Naive thymus-derived CD4-positive, alpha-beta T cell (primary cell): ENCODE measurements at regions of chr1 and their contacts with region 1.

Region 1: DNA sequence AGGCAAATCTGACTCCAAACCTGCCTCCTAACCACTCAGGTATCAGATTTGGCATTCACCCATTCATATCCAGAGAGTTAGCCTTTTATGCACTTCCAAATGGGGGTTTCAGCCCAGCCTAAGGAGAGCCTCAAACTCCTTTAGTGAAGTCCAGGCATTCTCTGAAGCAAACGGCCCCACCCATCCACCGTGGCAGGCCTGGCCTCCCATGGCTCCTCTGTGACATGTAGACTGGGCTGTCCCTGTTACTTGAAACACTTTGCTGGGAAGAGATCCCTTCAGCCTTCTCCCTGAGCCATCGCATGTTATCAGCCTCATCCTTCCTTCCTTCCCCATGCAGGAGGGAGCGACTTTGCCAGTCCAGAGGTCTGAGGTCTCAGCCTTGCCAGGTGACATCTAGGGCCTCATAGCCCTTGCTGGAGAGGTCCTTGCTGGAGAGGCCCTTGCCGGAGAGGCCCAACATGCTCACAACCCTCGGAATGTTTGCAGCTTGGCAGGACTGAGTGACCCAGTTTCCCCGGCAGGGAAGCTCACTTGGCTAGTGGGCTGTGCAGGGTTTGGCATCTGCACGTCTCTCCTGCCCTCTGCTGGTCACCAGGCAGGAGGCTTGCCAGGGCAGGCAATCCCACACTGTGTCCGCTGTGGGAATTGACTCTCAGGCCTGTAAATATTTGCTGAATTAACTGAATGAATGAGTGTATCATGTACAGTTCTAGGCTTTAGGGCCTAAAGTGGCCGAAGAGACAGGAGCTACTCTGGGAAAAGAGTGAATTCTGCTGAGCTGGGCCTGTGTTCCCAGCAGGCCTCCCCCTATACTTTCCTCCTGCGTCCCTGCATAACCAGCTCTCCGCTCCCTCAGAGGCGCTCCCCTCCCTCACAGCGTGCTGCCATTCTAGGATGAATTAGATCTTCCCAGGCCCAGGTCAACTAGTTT is 26.7 kb upstream of the RBM15 start:
- DNase-seq: peak; percentile 51 to 80 (median 71)
- ATAC-seq: peak; percentile 95
- H3K4me3 ChIP-seq: no peak overlapping the region
- H3K4me3 Mint-ChIP-seq: no peak overlapping the region
- H3K27ac ChIP-seq: no peak overlapping the region
- H3K27ac Mint-ChIP-seq: peak overlapping the region in 1 of 9 donors; percentile 14
- H3K4me1 ChIP-seq: peaks cover 0 to 5% of the 10 kb centered on the region in 2 donors
- H3K4me1 Mint-ChIP-seq: peaks cover 0 to 2% (median 0%) of the 10 kb centered on the region in 7 donors
- H3K27me3 ChIP-seq: no peaks in the 10 kb centered on the region
- H3K27me3 Mint-ChIP-seq: no peaks in the 10 kb centered on the region

Region 2: GRCh38 chr1:110196917-110197765 is 115.3 kb before region 1 on chr1:
- CTCF ChIA-PET with region 1: interaction called, 142 read pairs
- POLR2A ChIA-PET with region 1: no interaction called
- intact Hi-C with region 1: no loop called
- DNase-seq: peak; percentile 34 to 77 (median 57)
- ATAC-seq: peak; percentile 91
- H3K4me3 ChIP-seq: no peak overlapping the region
- H3K4me3 Mint-ChIP-seq: no peak overlapping the region
- H3K27ac ChIP-seq: no peak overlapping the region
- H3K27ac Mint-ChIP-seq: no peak overlapping the region
- H3K4me1 ChIP-seq: no peaks in the 10 kb centered on the region
- H3K4me1 Mint-ChIP-seq: peaks cover 0 to 6% (median 0%) of the 10 kb centered on the region in 7 donors
- H3K27me3 ChIP-seq: no peaks in the 10 kb centered on the region
- H3K27me3 Mint-ChIP-seq: no peaks in the 10 kb centered on the region

Region 3: GRCh38 chr1:110203021-110203661 is 109.3 kb before region 1 on chr1:
- CTCF ChIA-PET with region 1: interaction called, 252 read pairs
- POLR2A ChIA-PET with region 1: interaction called, 37 read pairs
- intact Hi-C with region 1: loop called (anchors 1 kb)
- DNase-seq: peak; percentile 31 to 83 (median 74)
- ATAC-seq: peak; percentile 71
- H3K4me3 ChIP-seq: no peak overlapping the region
- H3K4me3 Mint-ChIP-seq: peak overlapping the region in 5 of 10 donors; percentile 1 to 26 (median 18)
- H3K27ac ChIP-seq: no peak overlapping the region
- H3K27ac Mint-ChIP-seq: peak overlapping the region; percentile 53 to 92 (median 87)
- H3K4me1 ChIP-seq: peaks cover 8 to 20% of the 10 kb centered on the region in 2 donors
- H3K4me1 Mint-ChIP-seq: peaks cover 13 to 32% (median 23%) of the 10 kb centered on the region in 7 donors
- H3K27me3 ChIP-seq: no peaks in the 10 kb centered on the region
- H3K27me3 Mint-ChIP-seq: no peaks in the 10 kb centered on the region